Endothelial cell of umbilical vein (primary cell): ENCODE measurements at regions of chr10 and their contacts with region 1.

Region 1: DNA sequence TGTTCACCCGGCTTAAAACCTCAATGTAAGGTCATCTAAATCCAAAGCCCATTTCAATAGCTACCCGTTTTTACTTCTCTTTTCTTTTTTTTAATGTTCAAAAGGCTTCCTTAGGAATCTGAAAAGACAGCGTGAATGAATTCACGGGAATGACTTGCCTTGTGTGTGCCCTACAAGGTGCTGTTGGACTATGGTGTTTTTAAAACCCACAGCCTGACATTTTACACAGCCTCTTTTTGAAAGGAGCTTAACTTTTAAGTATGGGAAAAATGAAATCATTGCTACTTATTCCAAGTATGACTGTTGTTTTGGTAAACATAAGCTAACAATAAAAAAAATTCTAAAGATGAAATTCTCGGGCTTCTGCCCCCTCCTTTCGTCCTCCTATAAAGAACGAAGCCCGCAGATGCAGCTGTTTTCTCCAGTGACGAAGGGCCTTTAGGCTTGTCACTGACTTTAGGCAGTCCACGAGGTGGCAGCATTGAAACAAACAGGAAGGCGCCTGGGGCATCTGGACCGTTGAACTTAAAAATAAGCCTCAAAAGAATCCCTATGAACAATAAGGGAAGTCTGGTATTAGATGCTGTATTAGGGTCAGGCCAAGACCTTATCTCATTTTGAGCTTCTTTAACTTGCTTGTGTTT is 141.3 kb downstream of the NRP1 start:
- DNase-seq: peak; percentile 86
- H3K4me3 ChIP-seq: no peak overlapping the region
- H3K27ac ChIP-seq: peak overlapping the region; percentile 59
- H3K4me1 ChIP-seq: peaks cover 50% of the 10 kb centered on the region
- H3K27me3 ChIP-seq: no peaks in the 10 kb centered on the region
- CTCF ChIP-seq: peak; percentile 72 to 75
- POLR2A ChIP-seq: peak; percentile 23

Region 2: GRCh38 chr10:33115738-33116719 is 77.2 kb before region 1 on chr10:
- CTCF ChIA-PET with region 1: interaction called, 32 read pairs
- POLR2A ChIA-PET with region 1: no interaction called
- dilution Hi-C with region 1: no loop called
- intact Hi-C with region 1: loop called (anchors 1 kb)
- DNase-seq: peak; percentile 81
- H3K4me3 ChIP-seq: no peak overlapping the region
- H3K27ac ChIP-seq: no peak overlapping the region
- H3K4me1 ChIP-seq: peaks cover 3% of the 10 kb centered on the region
- H3K27me3 ChIP-seq: no peaks in the 10 kb centered on the region
- CTCF ChIP-seq: peak; percentile 75 to 77
- POLR2A ChIP-seq: no peak

Region 3: GRCh38 chr10:33216661-33217427 is 23.7 kb after region 1 on chr10:
- CTCF ChIA-PET with region 1: interaction called, 11 read pairs
- POLR2A ChIA-PET with region 1: no interaction called
- dilution Hi-C with region 1: no loop called
- intact Hi-C with region 1: loop called (anchors 2 kb)
- DNase-seq: peak; percentile 60
- H3K4me3 ChIP-seq: no peak overlapping the region
- H3K27ac ChIP-seq: peak overlapping the region; percentile 94
- H3K4me1 ChIP-seq: peaks cover 48% of the 10 kb centered on the region
- H3K27me3 ChIP-seq: no peaks in the 10 kb centered on the region
- CTCF ChIP-seq: no peak
- POLR2A ChIP-seq: no peak

Region 4: DNA sequence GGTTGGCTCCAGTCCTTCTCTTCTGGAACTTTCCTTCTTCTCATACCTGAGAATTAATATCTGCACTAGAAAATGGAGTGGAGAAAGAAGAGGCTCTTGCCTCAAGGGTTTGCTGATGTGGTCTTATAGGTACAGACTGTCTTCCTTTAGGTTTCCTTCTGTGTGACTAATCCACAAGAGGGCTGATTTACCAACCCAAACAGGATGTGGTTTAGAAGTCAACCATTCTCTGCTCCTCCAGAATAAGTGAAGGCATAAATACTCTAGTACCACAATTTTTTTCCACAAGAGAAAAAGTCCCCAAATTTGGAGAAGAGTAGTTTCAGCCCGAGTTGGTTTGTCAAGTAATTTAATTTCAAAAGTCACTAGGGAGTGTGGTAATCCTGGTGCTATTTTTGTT is 55.5 kb after region 1 on chr10:
- CTCF ChIA-PET with region 1: interaction called, 13 read pairs
- POLR2A ChIA-PET with region 1: interaction called, 3 read pairs
- dilution Hi-C with region 1: no loop called
- intact Hi-C with region 1: loop called (anchors 1 kb)
- DNase-seq: peak; percentile 87
- H3K4me3 ChIP-seq: no peak overlapping the region
- H3K27ac ChIP-seq: peak overlapping the region; percentile 100
- H3K4me1 ChIP-seq: peaks cover 64% of the 10 kb centered on the region
- H3K27me3 ChIP-seq: no peaks in the 10 kb centered on the region
- CTCF ChIP-seq: no peak
- POLR2A ChIP-seq: peak; percentile 35

Region 5: GRCh38 chr10:33314811-33315561 is 121.8 kb after region 1 on chr10:
- CTCF ChIA-PET with region 1: interaction called, 11 read pairs
- POLR2A ChIA-PET with region 1: no interaction called
- dilution Hi-C with region 1: no loop called
- intact Hi-C with region 1: no loop called
- DNase-seq: peak; percentile 79
- H3K4me3 ChIP-seq: no peak overlapping the region
- H3K27ac ChIP-seq: peak overlapping the region; percentile 5
- H3K4me1 ChIP-seq: peaks cover 51% of the 10 kb centered on the region
- H3K27me3 ChIP-seq: no peaks in the 10 kb centered on the region
- CTCF ChIP-seq: no peak
- POLR2A ChIP-seq: no peak

Region 6: DNA sequence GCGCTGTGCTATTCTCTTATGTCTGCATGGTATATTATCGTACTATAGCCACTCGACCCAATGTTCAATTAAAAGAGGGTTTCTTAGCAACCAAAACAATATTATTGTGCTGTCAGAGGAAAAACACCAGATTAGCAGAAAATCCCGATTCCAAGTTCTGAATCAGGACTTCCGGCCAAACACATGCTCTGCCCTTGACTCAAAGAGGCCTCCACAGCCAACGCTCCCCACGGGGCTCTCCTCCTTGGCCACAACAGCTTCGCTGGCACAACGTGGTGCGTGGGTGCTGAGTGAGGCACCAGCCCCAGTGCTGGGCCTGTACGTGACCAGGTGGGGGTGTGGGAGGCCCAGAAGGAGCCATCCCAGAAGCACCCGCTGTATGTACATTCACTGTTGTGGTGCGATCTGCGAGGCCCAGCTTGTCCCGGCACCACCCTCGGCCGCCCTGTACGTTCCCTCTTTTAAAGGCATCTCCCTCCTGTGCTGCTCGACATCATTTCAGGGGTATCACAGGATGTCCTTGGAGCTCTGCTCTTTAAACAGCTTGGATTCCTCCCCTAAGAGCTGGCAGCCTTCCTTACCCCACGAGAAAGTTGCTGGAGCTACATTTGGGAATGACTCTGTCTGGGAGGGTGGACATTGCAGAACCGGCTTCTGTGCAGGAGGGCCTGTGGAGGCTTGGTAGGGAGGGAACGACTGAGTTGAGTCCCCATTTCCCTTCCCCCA is 885.7 kb after region 1 on chr10:
- CTCF ChIA-PET with region 1: no interaction called
- POLR2A ChIA-PET with region 1: no interaction called
- dilution Hi-C with region 1: no loop called
- intact Hi-C with region 1: no loop called
- DNase-seq: peak; percentile 87
- H3K4me3 ChIP-seq: no peak overlapping the region
- H3K27ac ChIP-seq: no peak overlapping the region
- H3K4me1 ChIP-seq: peaks cover 6% of the 10 kb centered on the region
- H3K27me3 ChIP-seq: peaks cover 0 to 2% of the 10 kb centered on the region in 2 experiments
- CTCF ChIP-seq: no peak
- POLR2A ChIP-seq: no peak

Region 7: DNA sequence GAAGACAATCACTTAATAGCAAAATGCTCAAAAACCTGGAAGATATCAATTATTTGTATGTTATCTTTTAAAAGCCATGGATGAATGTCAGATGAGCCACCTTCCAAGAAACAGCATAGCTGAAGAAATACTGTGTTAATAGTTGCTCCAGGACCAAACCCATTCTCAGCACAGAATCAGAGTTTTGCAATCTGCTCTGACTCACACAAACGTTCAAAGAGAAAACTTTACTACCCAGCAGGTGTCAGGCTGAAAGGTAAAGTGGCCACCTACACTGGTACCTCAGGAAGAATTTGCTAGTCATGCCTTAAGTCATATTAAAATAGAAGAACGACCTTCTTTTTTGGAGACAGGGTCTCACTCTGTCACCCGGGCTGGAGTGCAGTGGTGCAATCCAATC is 1095.5 kb after region 1 on chr10:
- CTCF ChIA-PET with region 1: no interaction called
- POLR2A ChIA-PET with region 1: no interaction called
- dilution Hi-C with region 1: no loop called
- intact Hi-C with region 1: no loop called
- DNase-seq: no peak
- H3K4me3 ChIP-seq: no peak overlapping the region
- H3K27ac ChIP-seq: no peak overlapping the region
- H3K4me1 ChIP-seq: peaks cover 10% of the 10 kb centered on the region
- H3K27me3 ChIP-seq: no peaks in the 10 kb centered on the region
- CTCF ChIP-seq: no peak
- POLR2A ChIP-seq: no peak